ENCODE measurements at regions of chr13 and their contacts with region 1.

Region 1: GRCh38 chr13:20713751-20714150 is 10.3 kb downstream of the IL17D start:
- DNase-seq: no peak
- H3K4me3 ChIP-seq: no peak overlapping the region
- H3K27ac ChIP-seq: peak overlapping the region; percentile 31 to 64 (median 52)
- H3K4me1 ChIP-seq: peaks cover 0 to 16% of the 10 kb centered on the region in 2 donors
- H3K27me3 ChIP-seq: no peaks in the 10 kb centered on the region
- CTCF ChIP-seq: no peak
- POLR2A ChIP-seq: no peak

Region 2: GRCh38 chr13:20182231-20182846 is 531.4 kb before region 1 on chr13:
- intact Hi-C with region 1: loop called (anchors 10 kb)
- DNase-seq: peak; percentile 49 to 54
- H3K4me3 ChIP-seq: no peak overlapping the region
- H3K27ac ChIP-seq: no peak overlapping the region
- H3K4me1 ChIP-seq: no peaks in the 10 kb centered on the region
- H3K27me3 ChIP-seq: no peaks in the 10 kb centered on the region
- CTCF ChIP-seq: peak; percentile 28 to 86 (median 81)
- POLR2A ChIP-seq: no peak

Region 3: DNA sequence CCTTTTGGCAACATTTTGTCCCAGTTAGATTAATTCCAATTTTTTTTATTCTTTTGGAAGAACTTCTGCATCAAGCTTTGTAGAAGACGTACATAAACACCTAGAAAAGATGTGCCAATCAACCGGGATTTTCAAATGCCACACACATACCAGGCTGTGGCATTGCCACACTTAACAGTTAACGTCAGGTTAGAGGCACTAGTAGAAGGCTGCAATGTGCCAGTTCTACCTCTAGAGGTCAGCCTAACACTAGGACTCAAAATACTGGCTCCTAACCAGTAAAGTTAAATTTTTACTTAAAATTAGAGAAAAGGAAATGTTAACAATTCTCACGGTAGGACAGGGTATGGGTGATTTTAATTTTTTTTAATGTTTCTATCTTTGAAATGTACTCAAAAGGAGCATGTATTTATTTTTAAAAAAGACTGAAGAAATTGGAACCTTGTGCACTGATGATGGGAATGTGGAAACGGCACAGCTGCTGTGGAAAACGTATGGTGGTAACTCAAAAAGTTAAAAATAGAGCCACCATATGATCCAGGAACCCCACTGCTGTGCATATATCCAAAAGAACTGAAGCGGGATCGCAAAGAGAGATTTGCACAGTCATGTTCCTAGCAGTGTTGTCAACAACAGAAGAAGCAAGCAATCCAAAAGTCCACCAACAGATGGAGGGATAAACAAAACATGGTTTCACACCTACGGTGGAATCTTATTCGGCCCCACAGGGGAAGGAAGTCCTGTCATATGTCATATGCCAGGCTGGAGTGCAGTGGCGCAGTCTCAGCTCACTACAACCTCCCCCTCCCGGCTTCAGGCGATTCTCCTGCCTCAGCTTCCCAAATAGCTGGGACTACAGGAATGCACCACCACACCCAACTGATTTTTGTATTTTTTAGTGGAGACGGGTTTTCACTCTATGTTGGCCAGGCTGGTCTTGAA is 218.4 kb before region 1 on chr13:
- intact Hi-C with region 1: loop called (anchors 5 kb)
- DNase-seq: peak; percentile 64
- H3K4me3 ChIP-seq: no peak overlapping the region
- H3K27ac ChIP-seq: no peak overlapping the region
- H3K4me1 ChIP-seq: no peaks in the 10 kb centered on the region
- H3K27me3 ChIP-seq: no peaks in the 10 kb centered on the region
- CTCF ChIP-seq: peak; percentile 81 to 93 (median 88)
- POLR2A ChIP-seq: no peak

Region 4: GRCh38 chr13:20773194-20774080 is 59.7 kb after region 1 on chr13 and contains the start of gene EEF1AKMT1:
- intact Hi-C with region 1: loop called (anchors 5 kb)
- DNase-seq: peak; percentile 90 to 94
- H3K4me3 ChIP-seq: peak within 1 kb of the TSS; percentile 70 to 90 (median 71)
- H3K27ac ChIP-seq: peak within 1 kb of the TSS; percentile 63 to 91 (median 76)
- H3K4me1 ChIP-seq: peaks cover 7 to 11% of the 10 kb centered on the region in 2 donors
- H3K27me3 ChIP-seq: no peaks in the 10 kb centered on the region
- CTCF ChIP-seq: no peak
- POLR2A ChIP-seq: peak in 1 of 2 donors; percentile 83
- total RNA-seq, gene EEF1AKMT1: 7.5 to 15.2 (median 10.3) TPM

Region 5: GRCh38 chr13:20828539-20829364 is 115.0 kb after region 1 on chr13:
- intact Hi-C with region 1: loop called (anchors 2 kb)
- DNase-seq: peak in 1 of 2 donors; percentile 23
- H3K4me3 ChIP-seq: no peak overlapping the region
- H3K27ac ChIP-seq: peak overlapping the region in 1 of 3 donors; percentile 21
- H3K4me1 ChIP-seq: peaks cover 12 to 18% of the 10 kb centered on the region in 2 donors
- H3K27me3 ChIP-seq: no peaks in the 10 kb centered on the region
- CTCF ChIP-seq: peak; percentile 59 to 88 (median 74)
- POLR2A ChIP-seq: no peak

Region 6: GRCh38 chr13:20924758-20925394 is 211.1 kb after region 1 on chr13:
- intact Hi-C with region 1: loop called (anchors 5 kb)
- DNase-seq: peak; percentile 94
- H3K4me3 ChIP-seq: no peak overlapping the region
- H3K27ac ChIP-seq: no peak overlapping the region
- H3K4me1 ChIP-seq: no peaks in the 10 kb centered on the region
- H3K27me3 ChIP-seq: no peaks in the 10 kb centered on the region
- CTCF ChIP-seq: peak; percentile 61 to 87 (median 78)
- POLR2A ChIP-seq: no peak

Region 7: GRCh38 chr13:21014502-21015170 is 300.9 kb after region 1 on chr13:
- intact Hi-C with region 1: no loop called
- DNase-seq: peak; percentile 84 to 89
- H3K4me3 ChIP-seq: no peak overlapping the region
- H3K27ac ChIP-seq: peak overlapping the region; percentile 89 to 93 (median 90)
- H3K4me1 ChIP-seq: peaks cover 72 to 87% of the 10 kb centered on the region in 2 donors
- H3K27me3 ChIP-seq: no peaks in the 10 kb centered on the region
- CTCF ChIP-seq: peak in 1 of 6 experiments; percentile 7
- POLR2A ChIP-seq: peak in 1 of 2 donors; percentile 20

Measured in thyroid gland (tissue), 4 donors.